Activated CD4-positive, alpha-beta T cell treated with anti-CD3 and anti-CD28 coated beads for 36 hours (primary cell): ENCODE measurements at regions of chrX and their contacts with region 1.

Region 1: GRCh38 chrX:103918581-103919269 is 43.7 kb upstream of the TMSB15B start:
- DNase-seq: peak; percentile 82
- ATAC-seq: peak; percentile 89
- H3K4me3 Mint-ChIP-seq: peak overlapping the region; percentile 90
- H3K27ac Mint-ChIP-seq: peak overlapping the region; percentile 94
- H3K4me1 Mint-ChIP-seq: peaks cover 15% of the 10 kb centered on the region
- H3K27me3 Mint-ChIP-seq: no peaks in the 10 kb centered on the region

Region 2: DNA sequence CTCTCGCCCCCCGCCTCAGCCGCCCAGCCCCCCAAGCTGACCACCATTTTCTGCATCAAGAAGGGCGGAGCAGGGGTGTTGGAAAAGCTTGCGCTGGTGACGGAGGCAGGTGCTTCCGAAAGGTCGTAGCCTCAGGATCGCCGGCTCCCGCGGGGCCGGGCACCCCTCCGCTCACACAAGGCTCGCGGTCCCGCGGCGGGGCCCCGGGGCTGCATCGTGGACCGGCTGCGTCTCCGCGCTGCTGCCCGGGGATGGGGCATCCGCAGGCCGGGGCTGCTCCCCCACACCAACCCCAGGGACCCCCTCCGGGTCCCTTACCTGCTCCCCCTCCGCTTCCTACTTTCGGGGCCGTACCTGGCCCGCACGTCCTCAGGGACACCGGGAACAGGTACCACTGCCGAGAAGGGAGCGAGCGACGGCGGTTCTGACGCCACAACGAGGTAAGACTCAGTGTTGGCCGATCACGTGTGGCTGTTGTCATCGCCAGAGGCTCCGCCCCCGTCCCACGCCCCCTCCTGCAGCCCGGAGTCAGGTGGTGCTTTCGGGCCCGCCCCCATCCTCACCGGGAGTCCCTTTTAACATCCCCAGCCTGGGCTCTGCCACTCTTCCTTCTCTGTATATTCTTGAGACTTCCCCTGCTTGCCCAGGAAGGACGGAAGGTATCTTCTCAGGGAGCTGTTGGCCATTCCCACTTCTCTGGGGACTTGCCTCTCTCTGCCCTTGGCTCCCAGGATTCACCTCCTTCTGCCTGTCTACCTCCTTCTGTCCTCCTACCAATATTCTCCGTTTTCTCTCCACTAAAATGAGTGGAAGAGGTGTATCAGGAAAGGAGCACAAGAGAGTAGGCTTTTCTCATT is 608.0 kb before region 1 on chrX and contains the start of gene BEX2:
- CTCF ChIA-PET with region 1: no interaction called
- POLR2A ChIA-PET with region 1: no interaction called
- intact Hi-C with region 1: loop called in 1 of 2 experiments (anchors 2 kb)
- DNase-seq: peak; percentile 91
- ATAC-seq: peak; percentile 99
- H3K4me3 Mint-ChIP-seq: peak within 1 kb of the TSS; percentile 66
- H3K27ac Mint-ChIP-seq: no peak within 1 kb of the TSS
- H3K4me1 Mint-ChIP-seq: peaks cover 4% of the 10 kb centered on the region
- H3K27me3 Mint-ChIP-seq: no peaks in the 10 kb centered on the region
- total RNA-seq, gene BEX2: 7.4 to 11.5 TPM

Region 3: GRCh38 chrX:103932133-103932532 is 13.4 kb after region 1 on chrX:
- CTCF ChIA-PET with region 1: interaction called, 14 read pairs
- POLR2A ChIA-PET with region 1: no interaction called
- intact Hi-C with region 1: no loop called
- DNase-seq: no peak
- ATAC-seq: peak; percentile 83
- H3K4me3 Mint-ChIP-seq: no peak overlapping the region
- H3K27ac Mint-ChIP-seq: no peak overlapping the region
- H3K4me1 Mint-ChIP-seq: peaks cover 4% of the 10 kb centered on the region
- H3K27me3 Mint-ChIP-seq: no peaks in the 10 kb centered on the region

Region 4: GRCh38 chrX:103941201-103941975 is 22.7 kb after region 1 on chrX:
- CTCF ChIA-PET with region 1: interaction called, 5 read pairs
- POLR2A ChIA-PET with region 1: no interaction called
- intact Hi-C with region 1: loop called in 1 of 2 experiments (anchors 2 kb)
- DNase-seq: no peak
- ATAC-seq: peak; percentile 49
- H3K4me3 Mint-ChIP-seq: no peak overlapping the region
- H3K27ac Mint-ChIP-seq: no peak overlapping the region
- H3K4me1 Mint-ChIP-seq: peaks cover 34% of the 10 kb centered on the region
- H3K27me3 Mint-ChIP-seq: no peaks in the 10 kb centered on the region

Region 5: DNA sequence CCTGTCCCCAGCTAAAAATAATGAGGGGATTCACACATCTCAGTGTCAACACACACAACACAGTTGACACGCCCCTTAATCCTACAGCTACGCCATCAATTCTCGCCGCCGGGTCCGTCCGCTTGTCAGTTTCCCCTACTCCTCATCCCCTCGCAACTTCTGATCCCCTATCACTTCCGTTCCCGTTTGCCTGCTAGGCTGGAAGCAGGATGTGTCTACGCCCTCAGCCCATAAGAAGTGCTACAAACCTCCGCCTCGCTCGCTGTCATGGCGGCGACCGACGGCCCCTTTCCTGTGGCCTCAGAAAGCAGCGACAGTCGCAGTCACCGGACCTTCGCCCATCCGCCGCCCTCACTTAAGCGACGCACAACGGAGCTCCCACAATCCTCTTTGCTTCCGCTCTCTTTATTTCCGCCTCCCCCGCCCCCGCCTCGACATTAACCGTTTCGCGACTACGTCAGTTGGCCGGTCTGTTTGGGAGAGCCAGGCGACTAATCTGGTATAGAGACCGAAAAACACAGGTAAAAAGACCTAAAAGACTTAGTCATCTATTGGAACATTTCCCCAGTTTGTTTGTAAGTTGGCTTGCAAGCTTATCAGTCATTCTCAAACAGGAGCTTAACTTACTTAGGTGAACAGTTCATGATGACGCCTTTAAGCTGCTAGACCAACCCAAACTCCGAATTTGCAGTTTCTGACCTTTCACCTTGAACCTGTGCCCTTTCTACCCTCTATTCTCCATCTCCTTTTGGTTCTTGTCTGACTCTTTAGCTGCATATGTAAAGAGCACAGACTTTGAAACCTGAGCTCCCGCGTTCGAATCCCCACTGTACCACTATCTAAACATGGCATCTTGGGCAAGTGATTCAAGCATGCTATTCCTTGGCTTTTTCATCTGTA is 238.2 kb after region 1 on chrX and contains the start of gene SLC25A53:
- CTCF ChIA-PET with region 1: interaction called, 5 read pairs
- POLR2A ChIA-PET with region 1: no interaction called
- intact Hi-C with region 1: loop called in 1 of 2 experiments (anchors 1 kb)
- DNase-seq: peak; percentile 84
- ATAC-seq: peak; percentile 92
- H3K4me3 Mint-ChIP-seq: peak within 1 kb of the TSS; percentile 94
- H3K27ac Mint-ChIP-seq: peak within 1 kb of the TSS; percentile 99
- H3K4me1 Mint-ChIP-seq: peaks cover 11% of the 10 kb centered on the region
- H3K27me3 Mint-ChIP-seq: no peaks in the 10 kb centered on the region
- total RNA-seq, gene SLC25A53: 3.5 to 5.1 TPM